MCF 10A (cell line): ENCODE measurements at regions of chr1 and their contacts with region 1.

Region 1: GRCh38 chr1:236103646-236104218 is 38.6 kb upstream of the GPR137B start:
- DNase-seq: peak; percentile 82
- H3K4me3 Mint-ChIP-seq: no peak overlapping the region
- H3K27ac Mint-ChIP-seq: no peak overlapping the region
- H3K4me1 Mint-ChIP-seq: peaks cover 7% of the 10 kb centered on the region
- H3K27me3 Mint-ChIP-seq: no peaks in the 10 kb centered on the region
- CTCF ChIP-seq: peak; percentile 99

Region 2: DNA sequence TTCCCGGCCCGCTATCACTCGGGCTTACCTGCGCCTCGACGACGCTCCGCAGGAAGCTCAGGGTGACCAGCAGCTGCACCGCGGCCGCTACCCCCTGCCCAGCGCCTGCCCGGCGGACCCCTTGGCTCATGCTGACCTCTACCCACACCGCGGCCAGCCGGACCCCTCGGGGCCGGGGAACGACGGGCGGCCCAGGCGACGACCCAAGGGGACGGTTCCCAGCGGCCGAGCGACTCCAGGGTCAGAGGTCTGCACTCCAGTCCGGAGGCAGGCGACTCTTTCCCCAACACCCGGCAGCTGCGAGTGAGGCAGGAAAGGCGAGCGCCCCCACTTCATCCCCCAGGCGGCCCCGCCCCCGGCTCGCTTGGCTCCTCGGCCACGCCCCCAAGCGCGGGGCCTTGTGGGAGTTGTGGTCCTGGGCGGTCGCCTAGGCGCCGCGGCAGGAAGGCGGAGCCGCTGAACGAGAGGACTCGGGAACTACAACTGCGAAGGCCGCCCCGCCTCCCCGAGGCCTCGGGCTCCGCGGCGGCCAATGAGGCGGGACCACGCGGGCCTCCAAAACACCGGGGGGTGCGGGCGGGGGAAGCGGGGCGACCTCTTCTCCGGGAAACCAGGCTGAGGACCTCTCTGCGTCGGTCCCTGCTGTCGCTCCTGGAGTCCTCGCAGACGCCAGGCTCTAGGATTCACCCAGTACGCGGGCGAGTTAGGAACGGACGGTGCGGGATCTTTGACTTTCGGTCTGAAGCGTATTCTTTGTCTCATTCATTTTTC is 178.1 kb after region 1 on chr1 and contains the start of gene ERO1B:
- CTCF ChIA-PET with region 1: no interaction called
- POLR2A ChIA-PET with region 1: no interaction called
- intact Hi-C with region 1: loop called (anchors 5 kb)
- DNase-seq: peak; percentile 100
- H3K4me3 Mint-ChIP-seq: peak within 1 kb of the TSS; percentile 80
- H3K27ac Mint-ChIP-seq: peak within 1 kb of the TSS; percentile 24
- H3K4me1 Mint-ChIP-seq: peaks cover 23% of the 10 kb centered on the region
- H3K27me3 Mint-ChIP-seq: peaks cover 26% of the 10 kb centered on the region
- CTCF ChIP-seq: no peak
- total RNA-seq, gene ERO1B: 9.6 and 17.2 TPM in 2 replicates

Region 3: GRCh38 chr1:236495467-236496112 is 391.9 kb after region 1 on chr1:
- CTCF ChIA-PET with region 1: interaction called, 376 read pairs
- POLR2A ChIA-PET with region 1: no interaction called
- intact Hi-C with region 1: loop called (anchors 1 kb)
- DNase-seq: no peak
- H3K4me3 Mint-ChIP-seq: no peak overlapping the region
- H3K27ac Mint-ChIP-seq: no peak overlapping the region
- H3K4me1 Mint-ChIP-seq: no peaks in the 10 kb centered on the region
- H3K27me3 Mint-ChIP-seq: peaks cover 7% of the 10 kb centered on the region
- CTCF ChIP-seq: no peak

Region 4: DNA sequence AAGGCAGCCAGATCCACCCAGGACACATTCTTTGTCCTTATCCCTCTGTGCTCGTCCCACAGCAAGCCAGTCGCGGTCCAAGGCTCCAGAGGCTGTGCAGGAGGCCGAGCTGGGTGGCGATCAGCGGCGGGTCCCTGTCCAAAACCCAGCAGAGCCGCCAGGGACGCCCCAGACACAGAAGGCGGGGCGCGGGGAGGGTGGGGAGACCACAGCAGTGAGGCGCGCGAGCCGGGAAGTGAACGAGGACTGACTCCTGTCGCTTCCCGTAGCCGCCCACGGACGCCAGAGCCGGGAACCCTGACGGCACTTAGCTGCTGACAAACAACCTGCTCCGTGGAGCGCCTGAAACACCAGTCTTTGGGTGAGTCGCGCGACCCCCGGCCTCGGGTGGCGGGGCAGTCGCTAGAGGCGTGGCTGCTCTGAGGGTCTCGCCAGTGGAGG is 420.0 kb after region 1 on chr1 and contains the start of gene LGALS8:
- CTCF ChIA-PET with region 1: interaction called, 16 read pairs
- POLR2A ChIA-PET with region 1: interaction called, 3 read pairs
- intact Hi-C with region 1: no loop called
- DNase-seq: peak; percentile 92
- H3K4me3 Mint-ChIP-seq: peak within 1 kb of the TSS; percentile 98
- H3K27ac Mint-ChIP-seq: peak within 1 kb of the TSS; percentile 97
- H3K4me1 Mint-ChIP-seq: peaks cover 6% of the 10 kb centered on the region
- H3K27me3 Mint-ChIP-seq: no peaks in the 10 kb centered on the region
- CTCF ChIP-seq: no peak
- total RNA-seq, gene LGALS8: 73.2 and 99.7 TPM in 2 replicates

Region 5: DNA sequence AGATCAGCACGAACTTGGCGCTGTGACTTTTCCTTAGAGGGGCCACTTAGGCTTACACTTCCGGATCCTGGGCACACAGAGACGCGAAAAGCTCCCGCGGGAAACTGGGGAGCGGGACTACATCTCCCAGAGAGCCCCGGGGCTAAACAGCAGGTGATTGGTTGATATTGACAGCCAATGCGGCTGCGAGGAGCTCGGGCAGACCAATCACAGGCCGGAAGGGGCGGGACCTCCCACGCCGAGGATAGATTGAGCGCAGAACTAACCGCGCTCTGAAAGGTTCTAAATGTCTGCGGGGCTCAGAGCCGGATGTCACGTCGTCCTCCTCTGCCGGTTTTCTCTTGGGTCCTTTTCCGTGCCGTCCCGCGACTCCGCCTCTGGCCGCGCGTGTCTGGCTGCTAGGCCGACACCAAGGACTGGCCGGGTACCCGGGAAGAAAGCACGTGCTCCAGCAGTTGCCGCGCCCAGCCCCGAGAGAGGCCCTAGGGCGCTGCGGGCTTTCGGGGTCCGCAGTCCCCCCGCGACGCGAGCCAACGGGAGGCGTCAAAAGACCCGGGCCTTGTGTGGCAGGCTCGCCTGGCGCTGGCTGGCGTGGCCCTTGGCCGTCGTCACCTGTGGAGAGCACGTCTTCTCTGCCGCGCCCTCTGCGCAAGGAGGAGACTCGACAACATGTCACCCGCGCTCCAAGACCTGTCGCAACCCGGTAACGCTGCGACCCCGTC is 691.5 kb after region 1 on chr1 and contains the start of gene MTR:
- CTCF ChIA-PET with region 1: interaction called, 3 read pairs
- POLR2A ChIA-PET with region 1: no interaction called
- intact Hi-C with region 1: loop called (anchors 5 kb)
- DNase-seq: peak; percentile 100
- H3K4me3 Mint-ChIP-seq: peak within 1 kb of the TSS; percentile 93
- H3K27ac Mint-ChIP-seq: peak within 1 kb of the TSS; percentile 88
- H3K4me1 Mint-ChIP-seq: peaks cover 34% of the 10 kb centered on the region
- H3K27me3 Mint-ChIP-seq: peaks cover 15% of the 10 kb centered on the region
- CTCF ChIP-seq: no peak
- total RNA-seq, gene MTR: 54.6 and 59.1 TPM in 2 replicates

Region 6: GRCh38 chr1:237562242-237562823 is 1458.6 kb after region 1 on chr1:
- CTCF ChIA-PET with region 1: interaction called, 4 read pairs
- POLR2A ChIA-PET with region 1: no interaction called
- intact Hi-C with region 1: loop called (anchors 1 kb)
- DNase-seq: peak; percentile 89
- H3K4me3 Mint-ChIP-seq: no peak overlapping the region
- H3K27ac Mint-ChIP-seq: no peak overlapping the region
- H3K4me1 Mint-ChIP-seq: no peaks in the 10 kb centered on the region
- H3K27me3 Mint-ChIP-seq: no peaks in the 10 kb centered on the region
- CTCF ChIP-seq: peak; percentile 79